ENCODE measurements at regions of chrX and their contacts with region 1.

Region 1: DNA sequence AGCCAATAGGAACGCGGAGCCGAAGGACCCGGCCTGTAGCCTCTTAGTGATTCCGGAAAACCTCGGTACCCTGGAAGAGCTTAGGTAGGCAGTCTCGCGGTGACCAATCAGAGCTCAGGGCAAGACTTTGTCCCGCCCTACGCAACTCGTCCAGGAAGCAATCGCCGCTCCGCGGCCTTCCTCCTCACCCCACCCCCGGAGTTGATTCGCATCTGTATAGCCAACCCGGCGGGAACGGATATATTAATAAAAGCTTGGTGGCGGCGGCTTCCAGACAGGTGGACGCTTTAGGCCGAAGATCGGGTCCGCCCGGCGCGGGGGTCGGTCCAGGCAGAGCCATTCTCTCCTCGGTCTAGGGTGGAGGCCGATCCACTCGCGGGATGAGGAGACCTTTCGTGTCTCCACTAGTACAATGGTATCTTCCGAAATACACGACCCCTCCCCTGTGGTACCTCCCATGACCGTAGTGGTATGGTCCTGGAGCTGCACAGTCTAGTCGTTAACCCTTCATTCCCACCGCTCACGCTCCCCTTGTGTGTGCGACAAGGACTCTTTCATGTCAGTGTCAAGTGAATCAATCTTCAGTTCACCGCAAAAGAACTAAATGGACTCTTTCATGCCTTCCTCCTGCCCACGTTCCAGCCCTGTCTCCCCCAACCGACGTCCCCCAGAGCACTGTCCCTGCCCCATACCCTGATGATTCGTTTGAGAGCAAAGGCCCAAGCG is 24.2 kb upstream of the GLOD5 start:
- DNase-seq: peak; percentile 86
- H3K4me3 Mint-ChIP-seq: peak overlapping the region; percentile 89
- H3K27ac Mint-ChIP-seq: peak overlapping the region; percentile 93
- H3K4me1 Mint-ChIP-seq: peaks cover 15% of the 10 kb centered on the region
- H3K27me3 Mint-ChIP-seq: no peaks in the 10 kb centered on the region

Region 2: DNA sequence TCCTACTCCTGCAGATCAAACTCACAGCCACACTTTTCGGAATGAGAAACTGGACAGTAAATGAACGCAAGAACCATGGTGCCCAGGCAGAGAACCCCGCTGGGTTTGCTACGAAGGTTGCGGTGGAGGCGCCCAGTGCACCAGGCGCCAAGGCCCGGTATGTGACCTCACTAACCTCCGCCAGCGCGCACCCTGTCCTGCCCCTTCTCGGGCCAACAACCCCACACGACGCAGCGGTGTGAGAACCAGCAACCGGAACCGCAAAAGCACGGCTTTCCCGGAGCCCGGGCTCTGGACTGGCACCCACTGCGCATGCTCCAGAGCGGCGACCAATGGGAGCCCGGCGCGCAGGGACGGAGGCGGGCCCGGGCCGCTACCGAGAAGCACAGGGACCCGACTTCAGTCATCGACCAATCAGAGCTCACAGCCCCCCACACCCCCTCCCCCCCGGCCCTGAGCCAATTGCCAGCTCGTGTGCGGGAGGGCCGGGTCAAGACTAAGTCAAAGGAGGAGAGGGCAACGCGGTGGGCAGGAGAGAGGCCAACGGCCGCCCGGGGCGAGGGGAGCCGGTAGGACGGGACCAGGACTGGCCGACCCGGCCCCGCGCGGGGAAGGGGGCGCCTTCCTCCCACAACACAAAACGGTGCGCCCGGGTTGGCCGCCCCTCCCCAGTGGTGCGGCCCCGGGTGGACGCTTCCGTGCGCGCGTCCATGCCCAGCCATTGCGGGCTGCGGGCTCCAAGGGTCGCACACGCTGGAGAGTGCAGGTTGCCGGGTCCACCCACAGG is 61.1 kb before region 1 on chrX:
- intact Hi-C with region 1: loop called (anchors 2 kb)
- DNase-seq: peak; percentile 86
- H3K4me3 Mint-ChIP-seq: peak overlapping the region; percentile 91
- H3K27ac Mint-ChIP-seq: peak overlapping the region; percentile 91
- H3K4me1 Mint-ChIP-seq: peaks cover 13% of the 10 kb centered on the region
- H3K27me3 Mint-ChIP-seq: no peaks in the 10 kb centered on the region

Region 3: DNA sequence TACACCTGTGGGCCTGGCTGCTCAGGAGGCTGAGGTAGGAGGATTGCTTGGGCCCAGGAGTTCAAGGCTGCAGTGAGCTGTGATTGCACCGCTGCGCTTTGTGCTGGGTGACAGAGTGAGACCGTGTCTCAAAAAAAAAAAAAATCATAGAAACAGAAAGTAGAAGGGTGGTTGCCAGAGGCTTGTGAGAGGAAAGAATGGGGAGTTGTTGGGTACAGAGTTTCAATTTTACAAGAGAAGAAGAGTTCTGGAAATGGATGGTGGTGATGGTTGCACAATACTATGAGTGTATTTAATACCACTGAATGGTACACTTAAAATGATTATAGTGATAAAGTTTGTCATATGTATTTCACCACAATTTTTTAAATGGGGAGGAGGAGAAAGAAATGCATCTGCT is 14.0 kb after region 1 on chrX:
- intact Hi-C with region 1: loop called (anchors 1 kb)
- DNase-seq: no peak
- H3K4me3 Mint-ChIP-seq: no peak overlapping the region
- H3K27ac Mint-ChIP-seq: no peak overlapping the region
- H3K4me1 Mint-ChIP-seq: peaks cover 7% of the 10 kb centered on the region
- H3K27me3 Mint-ChIP-seq: peaks cover 3% of the 10 kb centered on the region

Region 4: DNA sequence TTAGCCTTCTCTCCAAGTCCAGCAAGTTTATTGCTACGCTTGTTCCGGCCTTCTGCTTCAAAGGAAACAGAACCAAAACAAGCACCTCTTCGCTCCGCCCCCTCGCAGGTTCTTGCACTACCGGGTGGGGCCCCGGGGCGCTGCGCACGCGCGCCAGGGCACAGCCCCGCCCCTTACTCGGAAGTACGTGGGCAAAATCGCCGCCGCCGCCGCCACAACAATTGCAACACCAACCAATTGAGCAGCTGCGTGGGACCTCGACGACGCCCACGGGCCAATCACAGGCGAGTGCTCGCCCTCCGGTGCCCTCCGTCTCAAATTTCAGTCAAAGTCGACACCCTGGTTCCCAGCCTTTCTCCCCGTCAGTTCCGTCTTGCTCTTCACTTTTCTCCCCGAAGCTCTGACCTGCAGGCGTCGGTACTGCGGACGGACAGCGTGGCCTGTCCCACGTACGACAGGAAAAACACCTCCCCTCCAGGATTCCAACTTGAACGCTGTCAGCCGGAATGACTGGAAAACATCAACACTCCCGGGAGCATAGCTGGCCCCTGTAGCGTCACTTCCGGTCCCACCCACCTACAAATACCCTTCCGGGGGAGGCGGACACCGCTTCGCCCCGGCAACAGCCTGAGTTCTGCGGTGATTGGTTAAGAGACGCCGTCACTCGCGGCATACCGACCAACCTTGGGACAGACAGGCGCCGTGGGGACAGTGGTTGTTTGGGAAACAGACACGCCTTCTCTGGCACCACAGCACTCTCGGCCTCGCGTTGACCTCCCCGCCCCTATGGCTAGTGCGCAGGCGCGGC is 220.7 kb after region 1 on chrX:
- intact Hi-C with region 1: loop called (anchors 5 kb)
- DNase-seq: peak; percentile 91
- H3K4me3 Mint-ChIP-seq: peak overlapping the region; percentile 99
- H3K27ac Mint-ChIP-seq: peak overlapping the region; percentile 100
- H3K4me1 Mint-ChIP-seq: peaks cover 34% of the 10 kb centered on the region
- H3K27me3 Mint-ChIP-seq: no peaks in the 10 kb centered on the region

Measured in activated T-helper 2 cell treated with anti-CD3 and anti-CD28 coated beads, Interferon-gamma antibody, Interleukin-2, Interleukin-4, amounts not matched to agents 10 μg/mL and 5 μg/mL and 100 μg/mL, durations not matched to agents 14 hours and 24 hours and 36 hours (primary cell).